ENCODE measurements at regions of chr17 and their contacts with region 1.

Region 1: DNA sequence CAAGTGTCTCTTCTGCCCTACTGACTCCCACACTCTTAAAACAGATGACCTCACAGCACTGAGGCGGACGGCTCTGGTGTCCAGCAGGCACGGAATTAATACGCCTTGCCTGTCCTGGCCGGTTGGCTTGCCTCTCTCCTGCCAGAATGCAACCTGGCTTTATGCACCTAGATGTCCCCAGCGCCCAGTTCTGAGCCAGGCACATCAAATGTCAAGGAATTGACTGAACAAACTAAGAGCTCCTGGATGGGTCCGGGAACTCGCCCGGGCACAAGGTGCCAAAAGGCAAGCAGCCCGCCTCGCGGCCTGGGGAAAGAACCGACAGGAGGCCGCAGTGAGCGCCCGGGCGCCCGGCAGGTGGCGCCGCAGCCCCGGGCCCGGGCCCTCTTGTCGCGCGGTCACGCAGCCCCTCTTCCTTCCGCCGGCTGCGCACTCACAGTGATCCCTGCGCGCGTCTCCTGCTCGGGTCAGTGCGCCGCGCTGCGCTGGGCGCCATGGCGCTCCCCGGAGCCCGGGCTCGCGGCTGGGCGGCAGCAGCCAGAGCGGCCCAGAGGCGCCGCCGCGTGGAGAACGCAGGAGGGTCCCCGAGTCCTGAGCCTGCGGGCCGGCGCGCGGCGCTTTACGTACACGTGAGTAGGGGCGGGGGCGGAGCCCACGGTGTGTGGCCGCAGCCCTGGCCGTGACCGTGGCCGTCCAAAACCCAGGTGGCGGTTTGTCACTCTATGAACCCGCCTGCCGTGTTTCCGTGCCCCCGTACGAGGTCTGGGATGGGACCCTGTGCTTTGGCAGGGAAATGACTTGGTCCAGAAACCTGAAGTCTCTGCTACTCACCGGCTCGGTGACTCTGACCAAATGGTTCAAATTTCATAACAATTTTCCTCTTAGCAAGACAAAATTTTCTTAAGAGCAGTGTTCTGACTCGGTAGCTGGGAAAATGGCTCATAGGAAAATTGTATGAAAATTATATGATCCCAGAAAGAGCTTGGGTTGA is at the start of gene RSAD1:
- DNase-seq: peak; percentile 83
- ATAC-seq: peak; percentile 82
- H3K4me3 Mint-ChIP-seq: peak within 1 kb of the TSS; percentile 81
- H3K27ac Mint-ChIP-seq: peak within 1 kb of the TSS; percentile 68; the same call in 1 of the 2 replicates
- H3K4me1 Mint-ChIP-seq: peaks cover 14% of the 10 kb centered on the region
- H3K27me3 Mint-ChIP-seq: peaks cover 20% of the 10 kb centered on the region
- CTCF ChIP-seq: peak; percentile 61
- total RNA-seq, gene RSAD1: 35.1 to 41.5 TPM (median 40.5 TPM) in 3 replicates

Region 2: DNA sequence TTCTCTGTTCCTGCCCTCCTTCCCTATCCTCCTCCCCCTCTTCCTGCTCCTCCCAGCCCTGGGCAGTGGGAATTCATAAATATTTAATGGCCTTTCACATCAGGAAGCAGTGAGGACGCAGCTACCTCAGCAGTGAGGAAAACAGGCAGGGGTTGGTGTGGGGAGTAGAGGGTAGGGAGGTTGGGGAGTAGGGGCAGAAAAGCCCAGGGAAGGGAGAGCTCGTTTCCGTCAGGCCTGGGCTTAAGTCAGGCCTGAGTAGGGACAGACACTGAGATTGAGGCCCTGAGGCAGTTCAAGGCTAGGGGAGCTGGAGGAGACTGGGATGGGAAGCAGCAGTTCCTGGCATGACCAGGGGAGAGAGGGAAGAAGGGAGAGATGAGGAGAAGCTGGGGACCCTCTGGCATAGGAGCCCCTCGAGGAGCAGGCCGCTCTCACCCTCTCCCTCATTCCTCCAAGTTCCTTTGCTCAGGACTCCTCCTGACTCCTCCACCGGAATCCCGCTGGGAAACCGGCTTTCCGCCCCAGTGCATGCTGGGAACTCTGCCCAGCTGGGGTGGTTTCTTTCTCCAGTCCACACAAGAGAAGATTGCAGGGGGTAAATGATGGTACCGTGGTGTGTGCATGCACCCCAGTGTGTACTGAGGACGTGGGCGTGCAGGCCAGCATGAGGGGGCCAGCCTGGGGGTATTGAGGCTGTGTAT is 354.9 kb before region 1 on chr17:
- CTCF ChIA-PET with region 1: no interaction called
- POLR2A ChIA-PET with region 1: no interaction called
- DNase-seq: no peak
- ATAC-seq: peak; percentile 70
- H3K4me3 Mint-ChIP-seq: peak overlapping the region; percentile 11; the same call in 1 of the 2 replicates
- H3K27ac Mint-ChIP-seq: peak overlapping the region; percentile 66
- H3K4me1 Mint-ChIP-seq: peaks cover 39% of the 10 kb centered on the region
- H3K27me3 Mint-ChIP-seq: peaks cover 38% of the 10 kb centered on the region
- CTCF ChIP-seq: no peak

Region 3: GRCh38 chr17:50361561-50362480 is 116.9 kb before region 1 on chr17:
- CTCF ChIA-PET with region 1: interaction called, 36 read pairs
- POLR2A ChIA-PET with region 1: no interaction called
- DNase-seq: peak; percentile 61
- ATAC-seq: peak; percentile 43
- H3K4me3 Mint-ChIP-seq: no peak overlapping the region
- H3K27ac Mint-ChIP-seq: peak overlapping the region; percentile 91; the same call in 1 of the 2 replicates
- H3K4me1 Mint-ChIP-seq: peaks cover 36% of the 10 kb centered on the region
- H3K27me3 Mint-ChIP-seq: no peaks in the 10 kb centered on the region
- CTCF ChIP-seq: peak; percentile 60

Region 4: GRCh38 chr17:50468409-50469207 is 10.1 kb before region 1 on chr17 and contains the start of gene CHAD:
- CTCF ChIA-PET with region 1: interaction called, 17 read pairs
- POLR2A ChIA-PET with region 1: no interaction called
- DNase-seq: peak; percentile 40
- ATAC-seq: peak; percentile 41
- H3K4me3 Mint-ChIP-seq: peak within 1 kb of the TSS; percentile 61
- H3K27ac Mint-ChIP-seq: no peak within 1 kb of the TSS
- H3K4me1 Mint-ChIP-seq: peaks cover 23% of the 10 kb centered on the region
- H3K27me3 Mint-ChIP-seq: peaks cover 27% of the 10 kb centered on the region
- CTCF ChIP-seq: no peak
- total RNA-seq, gene CHAD: 0.09 TPM in 2 of 3 replicates, not detected in the other

Region 5: GRCh38 chr17:50501054-50501453 is 22.4 kb after region 1 on chr17:
- CTCF ChIA-PET with region 1: interaction called, 35 read pairs
- POLR2A ChIA-PET with region 1: interaction called, 3 read pairs
- DNase-seq: no peak
- ATAC-seq: no peak
- H3K4me3 Mint-ChIP-seq: no peak overlapping the region
- H3K27ac Mint-ChIP-seq: no peak overlapping the region
- H3K4me1 Mint-ChIP-seq: peaks cover 8% of the 10 kb centered on the region
- H3K27me3 Mint-ChIP-seq: no peaks in the 10 kb centered on the region
- CTCF ChIP-seq: peak; percentile 30; the same call in 1 of the 2 replicates

Region 6: GRCh38 chr17:50534222-50534978 is 55.7 kb after region 1 on chr17:
- CTCF ChIA-PET with region 1: interaction called, 10 read pairs
- POLR2A ChIA-PET with region 1: no interaction called
- DNase-seq: peak; percentile 58
- ATAC-seq: peak; percentile 67
- H3K4me3 Mint-ChIP-seq: peak overlapping the region; percentile 87
- H3K27ac Mint-ChIP-seq: no peak overlapping the region
- H3K4me1 Mint-ChIP-seq: peaks cover 46% of the 10 kb centered on the region
- H3K27me3 Mint-ChIP-seq: peaks cover 26% of the 10 kb centered on the region
- CTCF ChIP-seq: no peak

Region 7: DNA sequence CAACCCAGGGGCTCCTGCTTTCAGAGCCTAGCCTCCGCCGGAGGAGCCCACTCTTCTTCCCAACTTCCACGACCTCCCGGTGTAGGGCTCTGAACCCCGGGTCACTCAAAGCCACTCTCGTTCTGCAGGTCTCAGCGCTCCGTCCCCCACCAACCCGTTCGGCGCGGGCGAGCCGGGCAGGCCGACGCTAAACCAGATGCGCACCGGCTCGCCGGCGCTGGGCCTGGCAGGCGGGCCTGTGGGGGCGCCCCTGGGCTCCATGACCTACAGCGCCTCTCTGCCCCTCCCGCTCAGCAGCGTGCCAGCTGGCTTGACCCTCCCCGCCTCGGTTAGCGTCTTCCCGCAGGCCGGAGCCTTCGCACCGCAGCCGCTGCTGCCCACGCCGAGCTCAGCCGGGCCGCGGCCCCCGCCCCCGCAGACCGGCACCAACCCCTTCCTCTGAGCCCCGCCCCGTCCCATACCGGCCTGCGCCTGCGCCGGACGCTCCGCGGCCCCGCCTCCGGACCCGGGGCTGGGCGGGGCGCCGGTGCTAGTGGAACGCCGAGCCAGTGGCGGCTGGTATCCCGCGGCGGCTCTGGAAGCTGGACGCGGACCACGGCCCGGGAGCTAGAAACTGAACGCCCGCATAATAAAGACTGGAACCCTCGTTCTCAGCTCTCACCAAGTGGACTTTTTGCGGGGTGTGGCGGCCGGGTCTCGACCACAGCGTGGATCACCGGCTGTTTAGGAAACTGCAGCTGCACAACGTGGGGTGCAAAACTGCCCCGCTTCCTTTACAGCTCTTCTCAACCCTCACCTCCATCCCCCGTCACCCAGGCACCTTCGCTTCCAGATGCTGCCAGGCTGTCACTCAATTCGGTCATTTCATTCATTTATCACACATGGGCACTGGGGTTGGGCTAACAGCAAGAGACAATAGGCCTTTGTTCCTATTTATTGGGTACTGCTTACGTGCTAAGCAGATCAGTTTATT is 63.3 kb after region 1 on chr17:
- CTCF ChIA-PET with region 1: interaction called, 21 read pairs
- POLR2A ChIA-PET with region 1: no interaction called
- DNase-seq: peak; percentile 90
- ATAC-seq: peak; percentile 79
- H3K4me3 Mint-ChIP-seq: peak overlapping the region; percentile 81
- H3K27ac Mint-ChIP-seq: peak overlapping the region; percentile 85
- H3K4me1 Mint-ChIP-seq: peaks cover 28% of the 10 kb centered on the region
- H3K27me3 Mint-ChIP-seq: peaks cover 14% of the 10 kb centered on the region
- CTCF ChIP-seq: no peak

Region 8: DNA sequence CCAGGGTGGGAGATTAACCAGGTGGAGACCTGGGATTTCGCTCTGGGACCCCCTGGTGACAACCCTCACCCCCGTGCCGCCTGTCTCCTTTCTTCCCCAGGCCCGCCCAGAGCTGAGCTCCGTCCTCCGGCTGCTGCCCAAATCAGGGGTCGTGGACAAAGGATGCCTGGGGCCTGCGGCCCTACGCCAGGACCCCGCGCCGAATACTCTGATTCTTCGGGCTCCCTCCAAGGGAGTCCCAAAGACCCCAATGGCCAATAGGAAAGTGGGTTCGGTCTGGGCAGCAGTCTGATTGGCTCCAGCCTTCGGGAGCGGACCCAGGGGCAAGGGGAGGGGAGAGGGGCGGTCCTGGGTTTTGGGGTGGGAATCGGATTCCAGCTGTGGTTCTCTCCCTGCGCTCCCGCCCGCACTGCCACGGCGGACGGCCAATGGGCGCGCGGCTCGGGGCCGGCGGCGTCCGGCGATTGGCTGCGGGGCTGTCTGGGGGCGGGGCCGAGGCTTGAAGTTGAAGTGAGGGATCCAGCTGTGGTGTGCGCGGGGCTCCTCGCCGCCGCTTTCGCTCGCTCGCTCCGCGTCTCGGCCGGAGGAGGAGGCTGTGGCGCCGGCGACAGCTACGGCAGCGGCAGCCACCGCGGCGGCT is 81.6 kb after region 1 on chr17 and contains the start of gene CACNA1G:
- CTCF ChIA-PET with region 1: interaction called, 11 read pairs
- POLR2A ChIA-PET with region 1: interaction called, 7 read pairs
- DNase-seq: peak; percentile 98
- ATAC-seq: peak; percentile 83
- H3K4me3 Mint-ChIP-seq: peak within 1 kb of the TSS; percentile 87
- H3K27ac Mint-ChIP-seq: peak within 1 kb of the TSS; percentile 97
- H3K4me1 Mint-ChIP-seq: peaks cover 37% of the 10 kb centered on the region
- H3K27me3 Mint-ChIP-seq: peaks cover 75% of the 10 kb centered on the region
- CTCF ChIP-seq: no peak
- total RNA-seq, gene CACNA1G: 5.4 to 6.7 TPM (median 6.2 TPM) in 3 replicates

Measured in WTC11 (cell line).